ENCODE measurements at regions of chr9 and their contacts with region 1.

Region 1: DNA sequence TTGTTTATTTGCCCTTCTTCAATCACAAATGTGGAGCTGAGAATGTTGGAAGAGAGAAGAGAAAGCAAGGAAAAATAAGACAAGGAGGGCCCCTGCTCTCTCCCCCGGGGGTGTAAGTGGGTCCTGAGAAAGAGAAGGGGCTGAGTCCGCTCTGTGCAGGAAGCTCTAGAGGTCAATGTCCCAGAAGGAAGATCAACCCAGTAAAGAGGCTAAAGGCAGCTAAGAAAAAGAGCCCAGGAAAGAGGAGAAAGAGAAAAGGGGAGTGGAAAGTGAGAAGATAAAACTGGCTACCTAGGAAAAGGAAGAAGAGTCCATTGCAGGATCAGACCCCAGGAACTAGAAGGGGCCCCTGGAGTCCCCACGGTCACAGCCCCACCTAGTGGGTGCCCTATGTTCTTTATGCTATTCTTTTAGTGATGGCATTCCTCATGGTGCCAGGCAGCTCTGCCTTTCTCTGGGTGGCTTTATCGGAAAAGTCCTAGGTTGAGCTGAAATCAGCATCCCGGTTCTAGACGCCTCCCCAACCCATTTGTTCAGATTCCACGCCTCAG is 583.4 kb downstream of the ACTL7B start:
- DNase-seq: peak; percentile 40 to 76 (median 71)
- ATAC-seq: peak; percentile 80 to 84
- H3K4me3 ChIP-seq: no peak overlapping the region
- H3K27ac ChIP-seq: no peak overlapping the region
- H3K4me1 ChIP-seq: no peaks in the 10 kb centered on the region
- H3K27me3 ChIP-seq: no peaks in the 10 kb centered on the region

Region 2: DNA sequence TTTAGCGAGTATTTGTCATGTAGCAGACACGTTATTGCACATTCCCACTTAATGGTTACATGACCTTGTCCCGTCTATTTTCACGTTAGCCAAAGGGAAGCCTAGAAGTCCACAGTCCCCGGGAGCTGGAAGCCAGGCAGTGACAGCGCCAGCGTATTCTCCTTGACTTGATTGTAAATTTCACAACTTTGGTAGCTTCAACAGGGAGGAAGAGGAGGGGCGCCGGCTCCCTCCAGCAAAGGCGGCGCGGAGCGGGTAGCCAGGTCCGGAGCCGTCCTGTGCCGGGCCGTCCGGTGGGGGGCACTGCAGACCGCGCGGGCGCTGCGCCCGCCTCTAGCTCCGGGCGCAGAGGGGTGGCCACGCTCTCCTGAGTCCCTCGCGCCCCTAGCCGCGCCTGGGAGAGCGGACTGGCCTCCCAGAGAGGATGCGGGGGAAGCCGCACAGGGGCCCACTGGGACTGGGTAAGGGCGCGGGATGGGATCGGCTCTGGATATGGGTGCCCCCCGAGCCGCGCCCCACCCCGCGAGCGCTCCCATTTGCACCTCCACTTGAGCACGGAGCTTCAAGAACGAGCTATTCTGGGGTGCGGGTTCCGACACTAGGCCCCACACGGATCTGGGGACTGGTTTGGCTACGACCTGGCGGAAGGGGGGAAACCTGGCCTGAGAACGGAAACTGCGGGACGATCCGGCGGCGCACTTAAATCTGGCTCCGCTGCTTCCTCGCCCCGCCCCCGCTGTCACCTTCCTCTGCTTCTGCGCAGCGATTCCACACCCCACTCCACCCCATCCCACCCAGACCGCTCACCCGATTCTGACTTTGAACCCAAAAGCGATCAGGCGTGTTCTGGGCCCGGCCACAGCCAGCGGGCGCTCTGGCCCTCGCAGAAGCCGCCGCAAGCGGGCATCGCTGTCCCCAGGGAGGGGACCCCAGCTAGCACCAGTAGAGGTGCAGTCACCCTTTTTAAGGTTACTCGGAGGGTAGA is 806.7 kb before region 1 on chr9:
- intact Hi-C with region 1: loop called in 2 of 4 experiments (anchors 10 kb)
- DNase-seq: peak; percentile 84 to 93 (median 91)
- ATAC-seq: peak; percentile 99
- H3K4me3 ChIP-seq: peak overlapping the region; percentile 36
- H3K27ac ChIP-seq: no peak overlapping the region
- H3K4me1 ChIP-seq: peaks cover 2% of the 10 kb centered on the region
- H3K27me3 ChIP-seq: no peaks in the 10 kb centered on the region

Region 3: GRCh38 chr9:107472581-107473340 is 799.7 kb before region 1 on chr9:
- intact Hi-C with region 1: loop called in 2 of 4 experiments (anchors 10 kb)
- DNase-seq: no peak
- ATAC-seq: no peak
- H3K4me3 ChIP-seq: no peak overlapping the region
- H3K27ac ChIP-seq: no peak overlapping the region
- H3K4me1 ChIP-seq: no peaks in the 10 kb centered on the region
- H3K27me3 ChIP-seq: no peaks in the 10 kb centered on the region

Region 4: DNA sequence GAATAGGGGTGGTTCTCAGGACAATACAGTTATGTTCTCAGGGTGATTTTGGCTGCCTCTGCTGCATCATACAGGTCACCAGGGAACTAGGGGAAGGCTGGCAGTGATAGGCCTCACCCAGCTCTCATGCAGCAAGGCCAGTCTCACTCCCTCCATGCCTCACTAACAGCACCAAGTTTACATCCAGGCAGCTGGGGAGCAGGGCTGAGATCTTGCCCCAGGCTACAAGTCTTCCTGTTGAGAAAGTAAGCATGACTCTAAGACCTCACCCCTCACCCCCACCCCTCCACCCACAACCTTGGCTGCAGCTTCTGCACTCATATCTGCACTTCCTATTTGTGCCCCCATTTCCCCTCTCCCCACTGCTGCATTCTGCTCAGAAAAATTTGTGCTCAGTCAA is 102.2 kb after region 1 on chr9:
- intact Hi-C with region 1: no loop called
- DNase-seq: no peak
- ATAC-seq: no peak
- H3K4me3 ChIP-seq: no peak overlapping the region
- H3K27ac ChIP-seq: no peak overlapping the region
- H3K4me1 ChIP-seq: no peaks in the 10 kb centered on the region
- H3K27me3 ChIP-seq: no peaks in the 10 kb centered on the region